OCI-LY7 (cell line): ENCODE measurements at regions of chr4 and their contacts with region 1.

Region 1: DNA sequence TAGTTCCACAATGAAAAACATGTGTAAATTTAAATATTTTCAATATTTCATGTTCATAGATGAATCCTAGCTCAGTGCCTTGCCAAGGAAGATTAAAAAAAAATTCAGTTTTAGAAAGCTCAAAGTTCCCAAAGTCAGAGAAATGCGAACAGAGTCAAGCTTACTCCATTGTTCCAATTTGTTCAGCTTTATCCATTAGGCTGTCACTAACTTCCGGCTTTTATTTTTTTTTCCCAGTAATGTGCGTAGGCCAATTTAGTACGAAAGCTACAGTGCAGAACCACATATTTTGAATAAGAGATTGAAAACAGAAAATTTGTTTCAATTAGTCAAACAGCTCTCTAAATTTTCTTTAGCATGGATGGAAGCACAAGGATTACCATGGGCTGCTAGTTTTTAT is 23.1 kb upstream of the KLHL2 start:
- DNase-seq: no peak
- H3K4me3 ChIP-seq: no peak overlapping the region
- H3K27ac ChIP-seq: no peak overlapping the region
- H3K4me1 ChIP-seq: no peaks in the 10 kb centered on the region
- CTCF ChIP-seq: no peak

Region 2: GRCh38 chr4:165152527-165152926 is 31.7 kb before region 1 on chr4:
- CTCF ChIA-PET with region 1: no interaction called
- POLR2A ChIA-PET with region 1: no interaction called
- intact Hi-C with region 1: loop called (anchors 5 kb)
- DNase-seq: no peak
- H3K4me3 ChIP-seq: no peak overlapping the region
- H3K27ac ChIP-seq: no peak overlapping the region
- H3K4me1 ChIP-seq: no peaks in the 10 kb centered on the region
- CTCF ChIP-seq: no peak